GM12878 (cell line): ENCODE measurements at regions of chr6 and their contacts with region 1.

Region 1: GRCh38 chr6:159174263-159174969 is 5.2 kb downstream of the FNDC1 start:
- DNase-seq: peak; percentile 2
- ATAC-seq: peak; percentile 98
- H3K4me3 ChIP-seq: no peak overlapping the region
- H3K27ac ChIP-seq: no peak overlapping the region
- H3K4me1 ChIP-seq: no peaks in the 10 kb centered on the region
- H3K27me3 ChIP-seq: peaks cover 8 to 19% of the 10 kb centered on the region in 2 experiments
- CTCF ChIP-seq: peak; percentile 91 to 96 (median 96)
- EP300 ChIP-seq: no peak
- POLR2A ChIP-seq: no peak
- RAD21 ChIP-seq: peak; percentile 96

Region 2: DNA sequence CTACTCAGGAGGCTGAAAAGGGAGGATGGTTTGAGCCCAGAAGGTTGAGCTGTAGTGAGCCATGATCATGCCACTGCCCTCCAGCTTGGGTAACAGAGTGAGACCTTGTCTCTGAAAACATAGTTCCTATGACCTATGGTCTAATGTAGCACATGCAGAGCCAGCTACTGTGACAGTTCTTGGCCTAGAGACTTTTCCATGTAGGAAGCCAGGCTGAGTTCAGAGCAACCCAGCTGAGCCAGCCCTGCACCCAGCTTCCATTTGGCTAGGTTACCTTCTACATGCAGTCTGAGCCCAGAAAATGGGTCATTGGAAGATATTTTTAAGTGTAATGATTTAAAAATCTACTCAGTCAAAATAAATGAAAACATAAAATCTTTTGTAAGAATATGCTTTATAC is 87.6 kb after region 1 on chr6:
- CTCF ChIA-PET with region 1: no interaction called
- POLR2A ChIA-PET with region 1: no interaction called
- RAD21 ChIA-PET with region 1: no interaction called
- SMC1A ChIA-PET with region 1: no interaction called
- in situ Hi-C with region 1: no loop called
- intact Hi-C with region 1: no loop called
- DNase-seq: no peak
- ATAC-seq: no peak
- H3K4me3 ChIP-seq: no peak overlapping the region
- H3K27ac ChIP-seq: no peak overlapping the region
- H3K4me1 ChIP-seq: no peaks in the 10 kb centered on the region
- H3K27me3 ChIP-seq: no peaks in the 10 kb centered on the region
- CTCF ChIP-seq: no peak
- EP300 ChIP-seq: no peak
- POLR2A ChIP-seq: no peak
- RAD21 ChIP-seq: no peak

Region 3: DNA sequence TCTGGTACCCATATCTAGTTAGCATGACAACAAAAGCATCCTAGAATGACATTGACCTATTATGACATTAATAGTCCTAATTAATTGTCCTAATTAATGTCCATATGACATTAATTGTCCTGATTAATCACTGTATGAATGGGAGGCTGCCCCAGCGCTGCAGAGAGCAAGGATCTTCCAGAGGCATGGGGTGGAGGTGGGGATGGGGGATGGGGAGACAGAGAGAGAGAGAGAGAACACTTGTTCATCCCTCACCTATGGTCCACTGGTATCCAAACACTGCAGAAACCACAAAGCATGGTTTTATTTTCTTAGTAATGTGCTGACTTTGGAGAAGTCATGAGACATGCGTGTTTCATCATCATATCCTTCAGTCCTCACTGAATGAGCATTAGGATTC is 229.9 kb after region 1 on chr6:
- CTCF ChIA-PET with region 1: no interaction called
- POLR2A ChIA-PET with region 1: no interaction called
- RAD21 ChIA-PET with region 1: no interaction called
- SMC1A ChIA-PET with region 1: no interaction called
- in situ Hi-C with region 1: no loop called
- intact Hi-C with region 1: no loop called
- DNase-seq: no peak
- ATAC-seq: no peak
- H3K4me3 ChIP-seq: no peak overlapping the region
- H3K27ac ChIP-seq: no peak overlapping the region
- H3K4me1 ChIP-seq: no peaks in the 10 kb centered on the region
- H3K27me3 ChIP-seq: no peaks in the 10 kb centered on the region
- CTCF ChIP-seq: no peak
- EP300 ChIP-seq: no peak
- POLR2A ChIP-seq: no peak
- RAD21 ChIP-seq: no peak

Region 4: GRCh38 chr6:159463119-159463829 is 288.9 kb after region 1 on chr6:
- CTCF ChIA-PET with region 1: no interaction called
- POLR2A ChIA-PET with region 1: no interaction called
- RAD21 ChIA-PET with region 1: no interaction called
- SMC1A ChIA-PET with region 1: interaction called, 5 read pairs
- in situ Hi-C with region 1: no loop called
- intact Hi-C with region 1: loop called (anchors 1 kb)
- DNase-seq: no peak
- ATAC-seq: no peak
- H3K4me3 ChIP-seq: no peak overlapping the region
- H3K27ac ChIP-seq: no peak overlapping the region
- H3K4me1 ChIP-seq: peaks cover 16% of the 10 kb centered on the region
- H3K27me3 ChIP-seq: no peaks in the 10 kb centered on the region
- CTCF ChIP-seq: peak in 2 of 3 experiments; percentile 9 to 30; a peak in 1 of 6 replicates
- EP300 ChIP-seq: no peak
- POLR2A ChIP-seq: no peak
- RAD21 ChIP-seq: peak; percentile 21; the same call in 1 of the 2 replicates

Region 5: DNA sequence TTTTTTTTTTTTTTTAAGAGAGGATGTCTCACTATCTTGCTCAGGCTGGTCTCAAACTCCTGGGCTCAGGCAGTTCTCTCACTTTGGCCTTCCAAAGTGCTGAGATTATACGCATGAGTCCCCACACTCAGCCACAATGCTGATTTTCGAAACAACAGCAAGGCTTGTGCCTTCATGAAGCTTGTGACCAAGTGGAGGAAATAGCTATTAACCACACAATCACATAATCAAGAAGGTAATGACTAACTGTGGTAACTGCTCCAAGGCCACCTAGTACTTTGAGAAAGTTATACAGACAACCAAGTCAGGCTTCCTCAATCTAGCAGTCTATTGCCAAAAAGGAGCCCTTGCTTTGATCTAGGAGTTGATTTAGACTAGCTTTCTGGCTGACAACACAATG is 472.3 kb after region 1 on chr6:
- CTCF ChIA-PET with region 1: interaction called, 3 read pairs
- POLR2A ChIA-PET with region 1: no interaction called
- RAD21 ChIA-PET with region 1: no interaction called
- SMC1A ChIA-PET with region 1: interaction called, 3 read pairs
- in situ Hi-C with region 1: loop called (anchors 5 kb)
- intact Hi-C with region 1: no loop called
- DNase-seq: peak; percentile 63
- ATAC-seq: peak; percentile 98
- H3K4me3 ChIP-seq: no peak overlapping the region
- H3K27ac ChIP-seq: no peak overlapping the region
- H3K4me1 ChIP-seq: peaks cover 4% of the 10 kb centered on the region; the same call in 1 of the 2 replicates
- H3K27me3 ChIP-seq: no peaks in the 10 kb centered on the region
- CTCF ChIP-seq: no peak
- EP300 ChIP-seq: no peak; a peak in 1 of 4 replicates
- POLR2A ChIP-seq: no peak
- RAD21 ChIP-seq: no peak

Region 6: GRCh38 chr6:159654483-159655098 is 480.2 kb after region 1 on chr6:
- CTCF ChIA-PET with region 1: interaction called, 14 read pairs
- POLR2A ChIA-PET with region 1: no interaction called
- RAD21 ChIA-PET with region 1: interaction called, 4 read pairs
- SMC1A ChIA-PET with region 1: interaction called, 14 read pairs
- in situ Hi-C with region 1: loop called (anchors 5 kb)
- intact Hi-C with region 1: loop called (anchors 2 kb)
- DNase-seq: peak; percentile 12
- ATAC-seq: peak; percentile 74
- H3K4me3 ChIP-seq: no peak overlapping the region
- H3K27ac ChIP-seq: no peak overlapping the region
- H3K4me1 ChIP-seq: no peaks in the 10 kb centered on the region
- H3K27me3 ChIP-seq: no peaks in the 10 kb centered on the region
- CTCF ChIP-seq: peak; percentile 42 to 62 (median 49); a peak in 5 of 6 replicates
- EP300 ChIP-seq: no peak
- POLR2A ChIP-seq: no peak
- RAD21 ChIP-seq: peak; percentile 71